WTC11 (cell line): ENCODE measurements at regions of chr3 and their contacts with region 1.

Region 1: DNA sequence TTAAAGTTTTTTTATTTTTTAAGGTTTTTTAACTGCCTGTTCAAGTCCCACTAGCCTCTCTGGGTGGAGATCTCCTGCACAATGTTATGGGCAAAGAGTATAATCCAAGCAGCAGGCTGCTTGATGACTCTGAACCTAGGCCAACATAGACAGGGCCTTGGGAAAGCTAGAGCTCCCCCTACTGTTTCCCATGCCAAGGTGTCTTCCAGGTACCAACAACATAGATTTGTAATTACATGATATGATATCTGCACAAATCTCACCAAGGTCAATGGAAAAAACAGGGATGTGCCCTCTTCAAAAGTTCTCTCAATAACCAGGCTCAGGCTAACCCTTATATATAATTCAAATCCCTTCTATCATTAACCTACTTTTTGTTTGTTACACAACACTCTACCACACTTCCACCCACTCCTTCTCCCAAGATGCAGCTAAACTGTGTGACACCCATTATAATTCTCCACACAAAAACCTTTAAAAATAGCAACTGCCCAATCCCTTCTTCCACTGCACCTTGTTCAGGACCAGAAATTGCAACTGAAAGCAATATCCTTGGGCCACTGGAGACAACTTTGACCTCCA is 43.8 kb downstream of the RBM15B start:
- DNase-seq: peak; percentile 30
- ATAC-seq: peak; percentile 95
- H3K4me3 Mint-ChIP-seq: no peak overlapping the region
- H3K27ac Mint-ChIP-seq: no peak overlapping the region
- H3K4me1 Mint-ChIP-seq: no peaks in the 10 kb centered on the region
- H3K27me3 Mint-ChIP-seq: no peaks in the 10 kb centered on the region
- CTCF ChIP-seq: peak; percentile 49; the same call in 1 of the 2 replicates

Region 2: GRCh38 chr3:51391075-51391567 is 43.7 kb before region 1 on chr3 and contains the start of gene RBM15B:
- CTCF ChIA-PET with region 1: interaction called, 10 read pairs
- POLR2A ChIA-PET with region 1: no interaction called
- DNase-seq: peak; percentile 98
- ATAC-seq: peak; percentile 86
- H3K4me3 Mint-ChIP-seq: peak within 1 kb of the TSS; percentile 76
- H3K27ac Mint-ChIP-seq: peak within 1 kb of the TSS; percentile 86
- H3K4me1 Mint-ChIP-seq: peaks cover 54% of the 10 kb centered on the region
- H3K27me3 Mint-ChIP-seq: no peaks in the 10 kb centered on the region
- CTCF ChIP-seq: no peak; the same call in 1 of the 2 replicates
- total RNA-seq, gene RBM15B: 53.9 to 55.6 TPM (median 55.4 TPM) in 3 replicates

Region 3: DNA sequence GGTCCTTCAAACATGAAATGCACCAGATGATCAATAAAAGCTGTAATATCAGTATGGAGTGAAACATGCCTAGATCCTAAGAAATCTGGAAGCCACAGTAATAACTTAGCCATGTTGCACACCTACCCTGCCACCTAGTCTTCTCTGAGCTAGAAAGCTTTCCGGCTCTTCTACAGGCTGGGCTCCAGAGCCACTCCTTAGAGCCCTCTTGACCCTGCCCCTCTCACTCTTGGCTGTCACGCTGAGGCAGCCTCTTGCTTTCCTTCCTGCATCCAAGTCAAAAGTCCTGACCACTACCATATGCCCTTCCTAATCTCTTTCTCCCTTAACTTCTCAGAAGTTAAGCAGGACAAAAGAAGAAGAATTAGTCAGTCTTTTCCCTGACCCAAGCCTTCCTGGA is 26.0 kb before region 1 on chr3:
- CTCF ChIA-PET with region 1: interaction called, 10 read pairs
- POLR2A ChIA-PET with region 1: no interaction called
- DNase-seq: no peak
- ATAC-seq: no peak
- H3K4me3 Mint-ChIP-seq: no peak overlapping the region
- H3K27ac Mint-ChIP-seq: no peak overlapping the region
- H3K4me1 Mint-ChIP-seq: no peaks in the 10 kb centered on the region
- H3K27me3 Mint-ChIP-seq: no peaks in the 10 kb centered on the region
- CTCF ChIP-seq: no peak

Region 4: DNA sequence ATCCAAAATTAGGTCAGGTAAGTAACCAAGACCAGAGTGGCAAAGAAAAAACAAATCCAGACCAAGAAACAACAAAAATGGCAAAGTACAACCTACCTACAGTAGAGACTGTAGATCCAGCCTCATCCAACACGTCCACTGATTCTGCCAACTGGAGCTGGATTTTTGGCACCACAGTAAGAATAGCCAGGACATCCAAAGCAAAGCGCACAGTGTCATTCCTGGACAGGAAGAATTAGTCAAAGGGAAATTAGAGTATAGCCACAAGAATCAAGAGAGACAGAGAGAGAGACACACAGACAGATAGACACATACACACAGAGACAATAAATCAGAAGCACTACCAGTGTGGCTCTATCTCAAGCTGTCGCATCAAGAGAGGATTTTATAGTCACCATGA is 12.6 kb before region 1 on chr3:
- CTCF ChIA-PET with region 1: interaction called, 11 read pairs
- POLR2A ChIA-PET with region 1: no interaction called
- DNase-seq: no peak
- ATAC-seq: no peak
- H3K4me3 Mint-ChIP-seq: no peak overlapping the region
- H3K27ac Mint-ChIP-seq: no peak overlapping the region; the same call in 1 of the 2 replicates
- H3K4me1 Mint-ChIP-seq: peaks cover 9% of the 10 kb centered on the region
- H3K27me3 Mint-ChIP-seq: no peaks in the 10 kb centered on the region
- CTCF ChIP-seq: no peak

Region 5: DNA sequence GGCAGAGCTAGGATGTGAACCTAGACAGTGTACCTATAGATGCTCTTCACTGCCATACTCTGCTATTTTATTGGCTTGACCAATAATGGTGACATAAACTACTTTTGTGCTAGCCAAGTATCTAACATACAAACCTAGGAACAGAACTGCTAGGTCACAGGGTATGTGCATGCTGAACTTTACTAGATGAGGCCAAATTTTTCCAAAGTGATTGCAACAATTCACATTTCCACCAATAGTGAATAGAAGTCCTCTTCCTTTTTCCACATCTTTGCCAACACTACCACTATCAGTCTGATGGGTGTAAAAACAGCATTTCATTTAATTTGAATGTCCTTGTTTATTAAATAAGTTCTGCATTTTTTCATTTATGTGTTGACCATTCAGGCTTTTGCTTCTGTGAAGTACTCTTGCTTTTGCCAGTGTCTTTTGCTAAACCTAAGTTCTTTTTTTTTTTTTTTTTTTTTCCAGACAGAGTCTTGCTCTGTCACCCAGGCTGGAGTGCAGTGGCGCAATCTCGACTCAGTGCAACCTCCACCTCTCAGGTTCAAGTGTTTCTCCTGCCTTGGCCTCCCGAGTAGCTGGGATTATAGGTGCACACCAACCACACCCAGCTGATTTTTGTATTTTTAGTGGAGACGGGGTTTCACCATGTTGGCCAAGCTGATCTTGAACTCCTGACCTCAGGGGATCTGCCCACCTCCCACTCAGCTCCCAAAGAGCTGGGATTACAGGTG is 10.9 kb after region 1 on chr3:
- CTCF ChIA-PET with region 1: interaction called, 20 read pairs
- POLR2A ChIA-PET with region 1: no interaction called
- DNase-seq: no peak
- ATAC-seq: no peak
- H3K4me3 Mint-ChIP-seq: no peak overlapping the region
- H3K27ac Mint-ChIP-seq: no peak overlapping the region
- H3K4me1 Mint-ChIP-seq: no peaks in the 10 kb centered on the region
- H3K27me3 Mint-ChIP-seq: no peaks in the 10 kb centered on the region
- CTCF ChIP-seq: no peak